MCF 10A (cell line): ENCODE measurements at regions of chr5 and their contacts with region 1.

Region 1: GRCh38 chr5:168020542-168021294 is 270.7 kb upstream of the WWC1 start:
- DNase-seq: peak; percentile 31
- H3K4me3 Mint-ChIP-seq: no peak overlapping the region
- H3K27ac Mint-ChIP-seq: no peak overlapping the region
- H3K4me1 Mint-ChIP-seq: no peaks in the 10 kb centered on the region
- H3K27me3 Mint-ChIP-seq: no peaks in the 10 kb centered on the region
- CTCF ChIP-seq: peak; percentile 59

Region 2: DNA sequence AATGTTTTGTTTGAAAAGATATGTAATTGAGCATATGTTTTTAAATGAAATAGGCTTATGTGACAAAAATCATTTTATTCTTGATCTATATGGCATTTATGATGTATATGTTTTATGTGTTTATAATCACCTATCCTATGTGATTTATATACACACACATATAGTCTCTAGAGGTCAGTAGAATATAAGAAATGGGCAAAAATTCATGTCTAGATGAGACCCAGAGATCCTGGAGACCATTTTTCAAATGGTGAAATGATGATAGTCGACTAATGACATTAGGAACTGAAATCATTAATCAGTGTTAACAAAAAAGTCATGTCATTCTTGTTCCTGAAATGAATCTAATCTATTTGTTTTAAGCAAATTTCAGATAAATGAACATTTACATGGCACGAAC is 438.4 kb before region 1 on chr5:
- CTCF ChIA-PET with region 1: interaction called, 16 read pairs
- POLR2A ChIA-PET with region 1: interaction called, 5 read pairs
- intact Hi-C with region 1: loop called (anchors 1 kb)
- DNase-seq: peak; percentile 52
- H3K4me3 Mint-ChIP-seq: no peak overlapping the region
- H3K27ac Mint-ChIP-seq: no peak overlapping the region
- H3K4me1 Mint-ChIP-seq: peaks cover 2% of the 10 kb centered on the region
- H3K27me3 Mint-ChIP-seq: peaks cover 33% of the 10 kb centered on the region
- CTCF ChIP-seq: peak; percentile 68

Region 3: DNA sequence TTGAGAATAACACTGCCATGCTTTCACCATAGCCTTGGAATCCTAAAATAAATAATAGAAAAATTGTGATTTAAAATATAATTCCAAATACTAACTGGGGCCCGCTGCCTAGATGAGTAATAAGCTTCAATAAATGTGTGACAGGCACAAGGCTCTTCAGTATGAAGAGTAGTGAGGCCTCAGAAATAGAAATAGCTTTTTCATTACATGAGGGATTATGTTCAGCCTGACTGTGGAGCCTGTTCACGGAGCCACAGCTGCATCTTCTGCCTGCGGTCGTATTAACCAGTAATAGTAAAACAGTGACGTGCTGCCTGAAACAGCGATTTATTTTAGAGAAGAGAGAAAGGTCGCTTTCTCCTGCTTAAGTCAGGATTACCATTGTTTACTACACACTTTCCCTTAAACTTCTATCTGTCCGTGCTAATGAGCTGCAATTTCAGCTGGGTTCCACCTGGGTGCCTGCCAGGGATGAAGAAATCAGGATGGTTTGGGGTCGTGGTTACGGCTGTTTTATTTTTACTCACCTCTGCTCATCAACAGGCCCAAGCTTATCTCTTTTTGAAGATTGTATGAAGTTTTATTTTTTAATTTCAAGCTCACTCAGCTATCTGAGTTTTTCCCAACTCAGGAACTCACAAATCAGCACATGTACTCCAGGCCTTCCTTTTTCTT is 14.1 kb before region 1 on chr5:
- CTCF ChIA-PET with region 1: interaction called, 10 read pairs
- POLR2A ChIA-PET with region 1: interaction called, 3 read pairs
- intact Hi-C with region 1: no loop called
- DNase-seq: no peak
- H3K4me3 Mint-ChIP-seq: no peak overlapping the region
- H3K27ac Mint-ChIP-seq: no peak overlapping the region
- H3K4me1 Mint-ChIP-seq: peaks cover 8% of the 10 kb centered on the region
- H3K27me3 Mint-ChIP-seq: no peaks in the 10 kb centered on the region
- CTCF ChIP-seq: no peak

Region 4: DNA sequence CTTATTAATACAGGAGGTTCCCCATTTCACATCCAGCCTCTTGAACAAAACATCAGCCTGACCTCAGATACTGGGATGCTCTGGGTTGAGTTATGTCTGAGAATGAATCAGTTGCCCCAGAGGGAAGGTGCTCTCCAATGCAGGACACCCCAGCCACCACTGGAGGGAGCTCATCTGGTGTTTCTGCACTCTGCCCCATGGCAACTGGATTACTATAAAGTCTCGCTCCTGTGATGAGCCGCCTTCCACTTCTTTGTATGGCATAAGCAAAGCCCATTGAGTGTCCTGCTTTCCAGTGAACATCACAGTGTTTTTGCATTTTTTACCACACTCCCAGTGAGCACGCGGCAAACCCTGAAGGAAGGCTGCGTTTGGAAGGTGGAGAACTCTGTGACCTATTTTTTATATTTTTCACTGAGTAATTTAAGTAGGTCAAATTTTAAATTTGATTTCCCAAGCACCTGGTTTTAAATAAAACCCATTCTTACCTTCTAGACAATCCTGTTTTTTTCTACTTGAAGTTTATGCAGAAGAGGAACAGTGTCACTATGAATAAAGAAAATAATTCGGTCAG is 93.8 kb after region 1 on chr5:
- CTCF ChIA-PET with region 1: no interaction called
- POLR2A ChIA-PET with region 1: no interaction called
- intact Hi-C with region 1: no loop called
- DNase-seq: peak; percentile 82
- H3K4me3 Mint-ChIP-seq: no peak overlapping the region
- H3K27ac Mint-ChIP-seq: no peak overlapping the region
- H3K4me1 Mint-ChIP-seq: peaks cover 5% of the 10 kb centered on the region
- H3K27me3 Mint-ChIP-seq: peaks cover 39% of the 10 kb centered on the region
- CTCF ChIP-seq: peak; percentile 89

Region 5: DNA sequence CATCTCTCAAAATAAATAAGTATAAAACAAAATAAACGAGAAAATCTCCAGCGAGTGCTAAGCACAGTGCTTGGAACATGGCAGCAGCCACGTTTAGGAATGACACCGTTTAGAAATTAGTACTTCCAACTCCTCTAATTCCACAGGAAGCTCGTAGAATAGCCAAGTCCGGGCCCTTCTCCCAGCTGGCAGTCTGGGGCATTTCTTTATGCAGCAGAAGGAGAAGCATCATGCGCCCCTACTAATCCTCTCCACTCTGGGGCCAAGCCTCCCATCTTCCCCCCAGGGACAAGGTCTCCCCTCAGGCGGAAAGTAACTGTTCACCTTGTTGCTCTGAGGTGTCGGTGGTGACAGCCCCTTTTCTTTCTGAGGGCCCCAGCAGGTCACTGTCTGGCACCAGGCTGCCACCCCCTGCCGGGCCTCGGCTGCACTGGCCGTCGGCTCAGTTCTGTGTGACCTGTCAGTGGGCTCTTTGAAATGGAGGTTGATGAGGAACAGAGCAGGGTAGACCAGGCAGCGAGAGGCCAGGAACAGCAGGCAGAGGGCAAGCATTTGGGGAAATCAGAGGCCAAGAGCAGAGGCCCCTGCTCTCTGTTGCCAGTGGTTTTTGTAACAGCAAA is 157.2 kb after region 1 on chr5:
- CTCF ChIA-PET with region 1: no interaction called
- POLR2A ChIA-PET with region 1: no interaction called
- intact Hi-C with region 1: no loop called
- DNase-seq: no peak
- H3K4me3 Mint-ChIP-seq: no peak overlapping the region
- H3K27ac Mint-ChIP-seq: no peak overlapping the region
- H3K4me1 Mint-ChIP-seq: no peaks in the 10 kb centered on the region
- H3K27me3 Mint-ChIP-seq: no peaks in the 10 kb centered on the region
- CTCF ChIP-seq: no peak